PC-3 (cell line): ENCODE measurements at regions of chr3 and their contacts with region 1.

Region 1: DNA sequence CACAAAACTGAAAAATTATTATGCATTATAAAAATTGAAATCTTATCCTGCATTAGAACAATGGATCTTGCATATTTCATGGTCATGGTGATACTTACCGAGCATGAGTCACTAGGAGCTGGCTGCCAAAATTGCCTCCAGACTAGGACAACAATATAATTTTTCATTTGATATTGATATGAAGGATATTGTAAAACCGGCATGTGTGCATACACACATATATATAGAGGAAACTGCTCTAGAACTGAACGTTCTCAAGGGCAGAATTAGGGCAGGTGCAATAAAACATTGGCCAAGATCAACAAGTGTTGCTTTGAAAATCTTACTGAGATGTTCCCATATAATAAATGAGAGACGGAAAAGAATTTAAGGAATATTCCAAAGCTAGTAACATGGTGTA is 319.4 kb upstream of the POU1F1 start:
- DNase-seq: peak; percentile 84
- ATAC-seq: peak; percentile 87
- H3K4me3 ChIP-seq: no peak overlapping the region
- H3K27ac ChIP-seq: peak overlapping the region; percentile 61
- H3K4me1 ChIP-seq: peaks cover 42% of the 10 kb centered on the region
- H3K27me3 ChIP-seq: no peaks in the 10 kb centered on the region
- CTCF ChIP-seq: no peak

Region 2: GRCh38 chr3:87446849-87447387 is 148.9 kb before region 1 on chr3:
- CTCF ChIA-PET with region 1: no interaction called
- POLR2A ChIA-PET with region 1: no interaction called
- intact Hi-C with region 1: no loop called
- DNase-seq: no peak
- ATAC-seq: no peak
- H3K4me3 ChIP-seq: no peak overlapping the region
- H3K27ac ChIP-seq: no peak overlapping the region
- H3K4me1 ChIP-seq: no peaks in the 10 kb centered on the region
- H3K27me3 ChIP-seq: no peaks in the 10 kb centered on the region
- CTCF ChIP-seq: no peak

Region 3: DNA sequence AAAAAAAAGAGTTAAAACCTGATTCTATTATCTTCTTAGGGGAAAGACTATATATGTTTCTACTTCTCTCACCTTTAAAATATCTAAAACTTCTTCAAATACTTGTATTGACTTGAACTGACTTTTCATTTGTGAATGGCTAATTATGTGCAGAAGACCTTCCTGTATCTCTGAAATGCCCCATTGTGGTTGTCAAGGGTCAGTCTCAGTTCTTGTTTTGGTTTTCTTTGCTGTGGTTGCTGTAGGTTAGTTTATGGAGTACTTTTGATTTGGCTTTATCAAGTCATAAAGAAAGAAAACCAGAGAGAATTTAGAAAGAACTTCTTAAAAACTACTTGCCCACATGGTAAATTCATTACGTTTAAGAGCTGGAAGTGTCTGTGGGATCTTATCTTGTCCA is 25.9 kb after region 1 on chr3:
- CTCF ChIA-PET with region 1: no interaction called
- POLR2A ChIA-PET with region 1: no interaction called
- intact Hi-C with region 1: loop called (anchors 1 kb)
- DNase-seq: no peak
- ATAC-seq: no peak
- H3K4me3 ChIP-seq: no peak overlapping the region
- H3K27ac ChIP-seq: no peak overlapping the region
- H3K4me1 ChIP-seq: no peaks in the 10 kb centered on the region
- H3K27me3 ChIP-seq: no peaks in the 10 kb centered on the region
- CTCF ChIP-seq: no peak

Region 4: GRCh38 chr3:87634441-87634840 is 38.6 kb after region 1 on chr3:
- CTCF ChIA-PET with region 1: no interaction called
- POLR2A ChIA-PET with region 1: no interaction called
- intact Hi-C with region 1: no loop called
- DNase-seq: no peak
- ATAC-seq: no peak
- H3K4me3 ChIP-seq: no peak overlapping the region
- H3K27ac ChIP-seq: no peak overlapping the region
- H3K4me1 ChIP-seq: no peaks in the 10 kb centered on the region
- H3K27me3 ChIP-seq: no peaks in the 10 kb centered on the region
- CTCF ChIP-seq: no peak